ENCODE measurements at regions of chr11 and their contacts with region 1.

Region 1: GRCh38 chr11:26849036-26849435 is 127.2 kb upstream of the SLC5A12 start:
- DNase-seq: no peak
- H3K4me3 ChIP-seq: no peak overlapping the region
- H3K27ac ChIP-seq: no peak overlapping the region
- H3K4me1 ChIP-seq: peaks cover 38% of the 10 kb centered on the region
- H3K27me3 ChIP-seq: no peaks in the 10 kb centered on the region

Region 2: GRCh38 chr11:26649884-26650283 is 199.2 kb before region 1 on chr11:
- in situ Hi-C with region 1: no loop called
- DNase-seq: peak; percentile 73
- H3K4me3 ChIP-seq: no peak overlapping the region
- H3K27ac ChIP-seq: no peak overlapping the region
- H3K4me1 ChIP-seq: no peaks in the 10 kb centered on the region
- H3K27me3 ChIP-seq: no peaks in the 10 kb centered on the region

Region 3: DNA sequence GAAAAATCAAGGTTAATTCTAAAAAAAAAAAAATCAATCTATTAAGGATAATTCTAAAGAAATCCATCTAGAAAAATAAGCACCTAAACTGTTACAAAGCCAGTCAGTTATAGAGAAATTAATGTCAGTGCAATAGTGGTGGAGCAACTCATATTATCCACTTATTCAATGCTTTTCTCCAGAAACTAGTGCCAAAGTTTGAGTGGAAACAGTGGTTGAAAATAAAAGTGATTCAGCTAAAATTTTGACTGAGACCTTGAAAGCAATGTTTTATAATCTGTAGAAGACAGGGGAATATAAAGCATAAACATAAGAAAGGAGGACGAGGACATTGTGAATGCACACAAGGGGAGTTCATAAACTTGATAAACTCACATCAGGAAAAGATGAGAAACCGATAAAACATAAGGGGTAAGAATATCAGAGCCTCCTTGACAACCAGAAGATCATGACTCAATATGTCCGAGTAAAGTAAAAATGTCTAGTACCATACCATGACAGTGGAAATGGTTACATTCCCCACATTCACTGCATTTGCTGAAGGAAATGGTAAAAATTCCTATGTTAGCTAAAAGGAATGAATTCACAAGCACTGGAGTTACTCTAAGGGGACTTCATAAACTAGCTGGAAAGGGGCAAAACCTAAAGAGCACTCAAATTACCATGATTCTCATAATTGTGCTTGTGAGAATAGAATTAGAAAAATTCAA is 68.5 kb before region 1 on chr11:
- in situ Hi-C with region 1: loop called (anchors 10 kb)
- DNase-seq: no peak
- H3K4me3 ChIP-seq: no peak overlapping the region
- H3K27ac ChIP-seq: no peak overlapping the region
- H3K4me1 ChIP-seq: peaks cover 20% of the 10 kb centered on the region
- H3K27me3 ChIP-seq: no peaks in the 10 kb centered on the region

Region 4: DNA sequence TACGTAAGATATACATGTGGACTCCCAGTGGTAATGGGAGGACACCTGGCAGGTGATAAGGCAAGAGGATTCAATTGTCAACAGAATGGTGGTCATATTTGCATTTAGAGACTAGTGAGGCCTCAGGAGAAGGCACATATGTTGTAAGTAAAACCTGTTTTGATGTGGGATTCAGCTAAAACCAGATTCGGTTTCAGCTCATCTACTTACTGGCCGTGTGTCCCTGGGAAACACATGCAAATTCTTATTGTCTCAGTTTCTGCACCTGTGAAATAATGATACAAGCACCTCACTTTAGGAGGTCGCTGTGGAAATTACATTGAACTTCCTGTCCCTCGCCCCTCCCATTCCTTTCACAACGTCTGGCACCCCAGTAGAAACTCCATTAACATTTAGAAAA is 65.9 kb after region 1 on chr11:
- in situ Hi-C with region 1: loop called (anchors 10 kb)
- DNase-seq: no peak
- H3K4me3 ChIP-seq: no peak overlapping the region
- H3K27ac ChIP-seq: no peak overlapping the region
- H3K4me1 ChIP-seq: no peaks in the 10 kb centered on the region
- H3K27me3 ChIP-seq: no peaks in the 10 kb centered on the region